Psoas muscle (tissue), 8 donors: ENCODE measurements at regions of chr15 and their contacts with region 1.

Region 1: DNA sequence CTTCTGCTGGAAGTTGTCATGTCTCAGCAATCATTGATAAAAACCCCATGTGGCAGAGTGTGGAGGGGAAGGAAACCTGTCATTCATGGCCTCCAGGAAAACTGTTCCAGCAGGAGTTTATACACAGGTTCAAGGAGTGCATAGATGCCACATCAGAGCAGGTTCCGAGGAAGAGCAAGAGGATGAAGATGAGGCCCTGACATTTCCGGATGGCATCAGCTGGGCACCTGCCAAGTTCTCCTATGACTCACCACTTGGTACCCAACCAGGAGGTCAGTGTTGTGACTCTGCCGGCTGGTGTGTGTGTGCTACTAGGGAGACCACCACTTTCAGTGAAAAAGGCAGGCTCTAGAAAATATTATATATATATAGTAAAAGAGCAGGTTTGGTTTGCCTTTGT is 69.4 kb downstream of the NTRK3 start:
- DNase-seq: peak in 1 of 2 donors; percentile 32
- ATAC-seq: peak in 2 of 4 donors; percentile 35 to 40
- H3K4me3 ChIP-seq: no peak overlapping the region
- H3K27ac ChIP-seq: no peak overlapping the region
- H3K4me1 ChIP-seq: no peaks in the 10 kb centered on the region
- H3K27me3 ChIP-seq: no peaks in the 10 kb centered on the region
- CTCF ChIP-seq: no peak

Region 2: GRCh38 chr15:87929841-87930240 is 257.3 kb before region 1 on chr15:
- intact Hi-C with region 1: no loop called
- DNase-seq: no peak
- ATAC-seq: no peak
- H3K4me3 ChIP-seq: no peak overlapping the region
- H3K27ac ChIP-seq: no peak overlapping the region
- H3K4me1 ChIP-seq: no peaks in the 10 kb centered on the region
- H3K27me3 ChIP-seq: no peaks in the 10 kb centered on the region
- CTCF ChIP-seq: no peak

Region 3: DNA sequence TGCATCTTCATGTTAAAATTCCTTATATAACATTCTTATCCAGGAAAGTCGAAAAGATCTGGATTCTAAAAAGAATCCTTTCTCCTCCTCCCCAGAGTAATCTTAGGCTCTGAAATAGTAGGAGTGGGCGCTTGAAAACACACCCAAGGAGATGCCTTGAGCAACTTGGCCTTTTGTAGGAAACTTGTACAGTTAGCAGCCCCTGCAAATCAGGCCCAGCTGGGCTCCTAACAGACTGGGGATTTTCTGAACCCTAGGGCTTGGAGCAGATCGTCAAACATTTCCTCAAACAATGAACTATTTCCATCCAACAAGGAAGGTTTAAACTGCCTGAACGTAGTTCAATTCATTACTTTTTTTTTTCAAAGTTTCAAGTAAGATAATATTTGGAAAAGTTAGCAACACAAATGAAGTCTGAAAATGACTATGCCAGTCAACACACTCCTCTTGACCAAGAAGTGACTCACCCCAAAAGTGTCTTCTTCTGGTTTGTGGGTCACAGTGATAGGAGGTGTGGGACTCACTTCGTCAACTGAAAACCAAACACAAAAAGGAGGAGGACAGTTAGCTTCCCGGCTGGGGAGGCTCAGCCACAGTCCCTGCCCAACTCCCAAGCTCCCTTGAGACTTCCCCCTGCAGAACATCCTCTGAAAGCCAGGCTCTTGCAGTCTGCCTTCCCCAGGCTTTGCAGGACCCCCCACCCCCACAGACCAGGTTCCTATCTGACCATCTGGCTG is 60.3 kb before region 1 on chr15:
- intact Hi-C with region 1: loop called in 1 of 2 experiments (anchors 10 kb)
- DNase-seq: no peak
- ATAC-seq: peak in 2 of 4 donors; percentile 9 to 27
- H3K4me3 ChIP-seq: no peak overlapping the region
- H3K27ac ChIP-seq: no peak overlapping the region
- H3K4me1 ChIP-seq: no peaks in the 10 kb centered on the region
- H3K27me3 ChIP-seq: no peaks in the 10 kb centered on the region
- CTCF ChIP-seq: no peak

Region 4: GRCh38 chr15:88323976-88324740 is 137.0 kb after region 1 on chr15:
- intact Hi-C with region 1: no loop called
- DNase-seq: no peak
- ATAC-seq: no peak
- H3K4me3 ChIP-seq: no peak overlapping the region
- H3K27ac ChIP-seq: no peak overlapping the region
- H3K4me1 ChIP-seq: no peaks in the 10 kb centered on the region
- H3K27me3 ChIP-seq: no peaks in the 10 kb centered on the region
- CTCF ChIP-seq: no peak